ENCODE measurements at regions of chr1 and their contacts with region 1.

Region 1: GRCh38 chr1:116504308-116505156 is 66.3 kb downstream of the CD58 start:
- DNase-seq: peak; percentile 93
- H3K4me3 Mint-ChIP-seq: peak overlapping the region; percentile 1
- H3K27ac Mint-ChIP-seq: peak overlapping the region; percentile 89
- H3K4me1 Mint-ChIP-seq: peaks cover 90% of the 10 kb centered on the region
- H3K27me3 Mint-ChIP-seq: no peaks in the 10 kb centered on the region

Region 2: DNA sequence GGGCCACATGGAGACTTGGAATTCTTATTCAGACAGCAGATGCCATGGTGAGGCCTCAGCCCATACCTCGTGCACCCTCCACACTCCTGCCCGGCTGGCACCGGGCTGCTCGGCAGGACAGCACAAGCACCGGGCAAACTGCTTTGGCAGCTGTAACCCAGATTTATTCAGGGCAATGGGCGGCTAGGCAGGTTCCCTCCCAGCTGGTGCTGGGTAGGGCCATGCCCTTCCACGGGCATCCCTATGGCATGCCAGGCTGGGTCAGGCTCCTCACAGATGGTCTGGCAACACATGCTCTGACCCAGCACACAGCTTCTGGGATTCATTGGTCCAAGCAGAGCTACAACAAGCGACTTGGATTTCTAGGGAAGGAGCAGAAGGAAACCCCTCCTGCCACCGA is 78.1 kb before region 1 on chr1:
- CTCF ChIA-PET with region 1: no interaction called
- POLR2A ChIA-PET with region 1: no interaction called
- DNase-seq: no peak
- H3K4me3 Mint-ChIP-seq: no peak overlapping the region
- H3K27ac Mint-ChIP-seq: no peak overlapping the region
- H3K4me1 Mint-ChIP-seq: no peaks in the 10 kb centered on the region
- H3K27me3 Mint-ChIP-seq: peaks cover 30% of the 10 kb centered on the region

Region 3: GRCh38 chr1:116538544-116538943 is 34.0 kb after region 1 on chr1:
- CTCF ChIA-PET with region 1: no interaction called
- POLR2A ChIA-PET with region 1: interaction called, 22 read pairs
- DNase-seq: peak; percentile 57
- H3K4me3 Mint-ChIP-seq: no peak overlapping the region
- H3K27ac Mint-ChIP-seq: peak overlapping the region; percentile 77
- H3K4me1 Mint-ChIP-seq: peaks cover 57% of the 10 kb centered on the region
- H3K27me3 Mint-ChIP-seq: no peaks in the 10 kb centered on the region

Region 4: GRCh38 chr1:116570358-116571200 is 66.0 kb after region 1 on chr1 and contains the start of gene CD58:
- CTCF ChIA-PET with region 1: interaction called, 6 read pairs
- POLR2A ChIA-PET with region 1: interaction called, 11 read pairs
- DNase-seq: peak; percentile 89
- H3K4me3 Mint-ChIP-seq: peak within 1 kb of the TSS; percentile 89
- H3K27ac Mint-ChIP-seq: peak within 1 kb of the TSS; percentile 85
- H3K4me1 Mint-ChIP-seq: peaks cover 66% of the 10 kb centered on the region
- H3K27me3 Mint-ChIP-seq: no peaks in the 10 kb centered on the region
- total RNA-seq, gene CD58: 55.2 to 59.7 TPM

Measured in activated CD4-positive, alpha-beta memory T cell treated with anti-CD3 and anti-CD28 coated beads, Interleukin-2, amount 10 ng/mL, durations not matched to agents 7 days and 5 days (primary cell).